ENCODE measurements at regions of chr12 and their contacts with region 1.

Region 1: DNA sequence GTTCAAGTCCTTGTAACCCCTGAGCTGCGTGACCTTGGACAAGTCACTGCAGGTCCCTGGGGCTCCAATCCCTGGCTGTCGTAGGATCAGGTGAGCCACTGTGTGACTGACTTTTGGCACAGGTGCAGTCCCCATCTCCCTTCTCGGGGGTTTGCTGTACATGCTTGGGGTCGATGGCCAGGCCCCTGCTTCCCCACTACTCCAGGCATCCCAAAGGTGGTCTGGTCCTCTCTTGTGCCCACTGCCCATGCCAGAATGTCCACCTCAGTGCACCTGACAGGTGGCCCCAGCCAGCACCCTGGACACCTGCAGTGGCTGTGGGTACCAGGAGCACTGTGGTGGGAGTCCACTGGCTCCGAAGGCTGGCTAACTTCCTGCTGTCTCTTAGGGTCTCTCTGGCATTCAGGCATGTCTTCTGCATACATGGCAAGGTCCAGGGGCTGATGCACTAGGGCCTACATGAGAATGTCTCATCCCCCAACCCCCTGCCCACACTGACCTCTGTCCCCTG is 14.7 kb downstream of the FOXN4 start:
- DNase-seq: no peak
- H3K4me3 ChIP-seq: no peak overlapping the region
- H3K27ac ChIP-seq: no peak overlapping the region
- H3K4me1 ChIP-seq: no peaks in the 10 kb centered on the region
- H3K27me3 ChIP-seq: peaks cover 3 to 7% of the 10 kb centered on the region in 2 experiments
- CTCF ChIP-seq: no peak
- POLR2A ChIP-seq: no peak

Region 2: DNA sequence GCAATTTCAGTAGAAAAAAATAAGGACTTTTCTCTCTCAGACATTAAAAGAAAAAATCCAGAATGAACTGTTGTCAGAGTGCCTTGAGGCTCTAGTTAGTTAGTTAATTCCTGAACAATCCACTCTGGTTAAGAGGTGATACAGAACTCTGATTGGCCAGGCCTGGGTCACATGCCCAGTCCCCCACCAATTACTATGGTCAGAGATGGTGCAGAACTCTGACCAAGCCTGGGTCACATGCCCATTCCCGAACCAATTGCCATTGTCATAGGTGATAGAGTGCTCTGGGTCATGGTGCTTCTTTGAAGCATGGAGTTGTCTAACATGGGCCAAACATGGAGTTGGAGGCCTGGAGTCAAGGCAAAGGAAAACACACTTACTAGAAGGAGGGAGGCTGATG is 42.3 kb after region 1 on chr12:
- CTCF ChIA-PET with region 1: no interaction called
- POLR2A ChIA-PET with region 1: no interaction called
- dilution Hi-C with region 1: no loop called
- intact Hi-C with region 1: loop called (anchors 1 kb)
- DNase-seq: no peak
- H3K4me3 ChIP-seq: no peak overlapping the region
- H3K27ac ChIP-seq: no peak overlapping the region
- H3K4me1 ChIP-seq: no peaks in the 10 kb centered on the region
- H3K27me3 ChIP-seq: peaks cover 0 to 2% of the 10 kb centered on the region in 2 experiments
- CTCF ChIP-seq: no peak
- POLR2A ChIP-seq: no peak

Measured in endothelial cell of umbilical vein (primary cell).